CD4-positive, alpha-beta T cell (primary cell): ENCODE measurements at regions of chr2 and their contacts with region 1.

Region 1: DNA sequence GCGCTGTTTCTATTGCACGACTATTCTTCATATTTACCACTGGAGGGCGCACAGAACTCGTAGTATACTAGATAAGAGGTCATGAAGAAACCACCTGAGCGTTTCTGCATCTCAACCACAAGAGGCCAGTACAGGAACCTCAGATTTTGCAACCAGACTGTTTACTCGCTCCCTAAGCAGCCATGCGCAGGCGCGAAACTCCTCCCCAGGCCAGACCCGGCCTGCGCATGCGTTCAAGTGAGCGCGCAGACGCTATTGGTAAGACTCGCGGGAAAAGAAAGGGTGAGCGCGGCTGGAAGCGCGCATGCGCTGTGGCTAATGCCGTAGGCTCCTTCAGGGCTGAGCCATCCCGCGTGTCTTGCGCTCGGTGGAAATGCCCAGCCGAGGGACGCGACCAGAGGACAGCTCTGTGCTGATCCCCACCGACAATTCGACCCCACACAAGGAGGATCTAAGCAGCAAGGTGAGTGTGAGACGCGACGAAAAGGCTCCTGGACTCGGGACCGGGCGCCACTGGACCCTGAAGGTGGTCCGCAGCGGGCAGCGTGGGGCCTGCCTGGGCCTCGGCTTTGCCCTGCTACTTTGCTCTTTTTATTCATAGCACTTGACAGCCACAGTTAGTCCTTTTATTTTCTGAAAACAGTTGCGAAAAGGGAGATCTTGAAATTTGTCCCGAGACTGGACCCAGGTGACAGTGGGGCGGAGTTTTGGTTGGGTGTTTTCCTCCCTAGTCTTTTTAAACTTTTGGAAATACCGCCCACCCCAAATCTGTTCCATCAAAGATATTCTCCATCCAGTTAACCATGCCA is at the start of gene ASNSD1:
- DNase-seq: peak; percentile 95 to 100 (median 99)
- ATAC-seq: peak; percentile 89
- H3K4me3 ChIP-seq: peak within 1 kb of the TSS; percentile 97
- H3K4me3 Mint-ChIP-seq: no peak within 1 kb of the TSS
- H3K27ac ChIP-seq: peak within 1 kb of the TSS; percentile 87 to 93
- H3K27ac Mint-ChIP-seq: no peak within 1 kb of the TSS
- H3K4me1 ChIP-seq: peaks cover 41% of the 10 kb centered on the region
- H3K4me1 Mint-ChIP-seq: peaks cover 60% of the 10 kb centered on the region
- H3K27me3 ChIP-seq: no peaks in the 10 kb centered on the region
- H3K27me3 Mint-ChIP-seq: no peaks in the 10 kb centered on the region
- CTCF ChIP-seq: peak; percentile 92
- total RNA-seq, gene ASNSD1: 38.9 to 40.6 TPM

Region 2: GRCh38 chr2:189580658-189581353 is 80.5 kb before region 1 on chr2 and contains the start of gene SLC40A1:
- CTCF ChIA-PET with region 1: no interaction called
- POLR2A ChIA-PET with region 1: interaction called, 28 read pairs
- intact Hi-C with region 1: loop called in 1 of 2 experiments (anchors 5 kb)
- DNase-seq: peak; percentile 44 to 88 (median 69)
- ATAC-seq: peak; percentile 96
- H3K4me3 ChIP-seq: peak within 1 kb of the TSS; percentile 79
- H3K4me3 Mint-ChIP-seq: peak within 1 kb of the TSS; percentile 95
- H3K27ac ChIP-seq: peak within 1 kb of the TSS; percentile 46 to 66
- H3K27ac Mint-ChIP-seq: peak within 1 kb of the TSS; percentile 83
- H3K4me1 ChIP-seq: peaks cover 21% of the 10 kb centered on the region
- H3K4me1 Mint-ChIP-seq: peaks cover 56% of the 10 kb centered on the region
- H3K27me3 ChIP-seq: no peaks in the 10 kb centered on the region
- H3K27me3 Mint-ChIP-seq: peaks cover 9% of the 10 kb centered on the region
- CTCF ChIP-seq: no peak
- total RNA-seq, gene SLC40A1: 7.4 to 8.2 TPM

Region 3: DNA sequence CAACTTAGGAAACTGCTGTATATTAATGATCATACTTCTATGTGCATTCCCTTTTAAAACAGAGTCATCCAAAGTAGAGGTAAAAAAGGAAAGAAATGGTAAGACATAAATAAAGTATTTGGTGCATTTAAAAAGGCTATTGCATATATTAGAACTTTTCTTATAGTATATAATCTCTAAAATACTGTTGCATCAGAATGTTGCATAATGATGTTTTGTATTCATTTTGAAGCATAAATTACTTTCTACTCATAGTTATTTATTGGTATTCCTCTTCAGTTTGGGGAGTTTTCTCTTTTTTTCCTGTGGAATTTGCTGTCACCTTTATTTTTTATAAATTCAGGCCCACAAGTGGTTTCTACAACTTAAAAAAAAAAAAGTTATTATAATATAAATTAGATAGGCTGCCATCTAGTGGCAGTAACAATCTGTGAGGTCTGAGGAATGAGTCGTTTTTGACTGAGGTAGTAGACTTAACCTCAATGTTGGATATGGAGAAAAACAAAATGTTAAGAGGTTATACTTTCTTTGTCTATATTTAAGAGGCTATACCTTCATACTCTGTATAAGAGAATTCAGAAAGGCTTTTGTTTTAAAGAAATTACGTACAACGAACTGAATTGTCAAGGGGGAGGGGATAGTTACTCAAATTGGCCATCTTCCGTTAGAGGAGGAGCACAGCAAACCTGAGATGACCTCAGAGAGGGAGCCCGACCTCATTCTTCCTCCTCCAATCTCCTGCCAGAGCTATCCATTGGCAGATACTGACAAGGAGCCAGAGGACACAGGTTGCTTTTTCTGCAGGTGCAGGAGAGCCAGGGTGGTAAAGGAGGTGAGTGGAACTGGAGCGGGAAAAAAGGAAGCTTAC is 36.9 kb after region 1 on chr2:
- CTCF ChIA-PET with region 1: interaction called, 38 read pairs
- POLR2A ChIA-PET with region 1: interaction called, 7 read pairs
- intact Hi-C with region 1: loop called (anchors 1 kb)
- DNase-seq: peak in 8 of 14 experiments; percentile 11 to 76 (median 49)
- ATAC-seq: peak; percentile 71
- H3K4me3 ChIP-seq: no peak overlapping the region
- H3K4me3 Mint-ChIP-seq: no peak overlapping the region
- H3K27ac ChIP-seq: no peak overlapping the region
- H3K27ac Mint-ChIP-seq: no peak overlapping the region
- H3K4me1 ChIP-seq: no peaks in the 10 kb centered on the region
- H3K4me1 Mint-ChIP-seq: no peaks in the 10 kb centered on the region
- H3K27me3 ChIP-seq: no peaks in the 10 kb centered on the region
- H3K27me3 Mint-ChIP-seq: no peaks in the 10 kb centered on the region
- CTCF ChIP-seq: peak; percentile 87

Region 4: GRCh38 chr2:189783927-189784867 is 122.8 kb after region 1 on chr2 and contains the starts of genes ORMDL1 and PMS1:
- CTCF ChIA-PET with region 1: no interaction called
- POLR2A ChIA-PET with region 1: interaction called, 10 read pairs
- intact Hi-C with region 1: loop called (anchors 1 to 5 kb)
- DNase-seq: peak; percentile 84 to 98 (median 92)
- ATAC-seq: peak; percentile 91
- H3K4me3 ChIP-seq: peak within 1 kb of the TSS; percentile 84
- H3K4me3 Mint-ChIP-seq: peak within 1 kb of the TSS; percentile 99
- H3K27ac ChIP-seq: peak within 1 kb of the TSS; percentile 90 to 93
- H3K27ac Mint-ChIP-seq: peak within 1 kb of the TSS; percentile 99
- H3K4me1 ChIP-seq: peaks cover 23% of the 10 kb centered on the region
- H3K4me1 Mint-ChIP-seq: peaks cover 58% of the 10 kb centered on the region
- H3K27me3 ChIP-seq: no peaks in the 10 kb centered on the region
- H3K27me3 Mint-ChIP-seq: no peaks in the 10 kb centered on the region
- CTCF ChIP-seq: no peak
- total RNA-seq, gene ORMDL1: 104 to 106 TPM
- total RNA-seq, gene PMS1: 9.6 to 9.8 TPM

Region 5: DNA sequence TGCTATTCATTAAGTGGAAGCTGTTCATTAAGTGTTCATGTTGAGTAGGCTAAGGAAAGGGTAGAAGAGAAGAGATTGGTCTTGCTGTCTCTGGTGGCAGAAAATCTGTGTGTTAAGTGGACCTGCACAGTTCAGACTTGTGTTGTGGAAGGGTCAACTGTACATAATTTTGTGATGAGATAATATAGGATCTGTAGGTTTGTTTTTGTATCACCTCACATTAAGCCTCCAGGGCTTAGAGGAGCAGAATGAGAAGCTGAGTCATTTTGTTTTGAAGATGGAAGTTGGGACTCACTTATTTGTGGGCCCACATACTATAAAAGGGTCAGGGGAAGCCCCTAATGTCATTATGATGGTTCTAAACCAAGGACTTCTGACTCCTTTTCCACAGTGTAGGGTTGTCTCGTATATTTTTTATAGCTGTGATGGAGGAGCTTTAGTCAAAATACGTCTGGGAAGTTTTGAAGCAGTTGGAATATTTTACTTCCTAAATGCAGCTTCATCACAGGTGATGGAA is 141.1 kb after region 1 on chr2:
- CTCF ChIA-PET with region 1: no interaction called
- POLR2A ChIA-PET with region 1: no interaction called
- intact Hi-C with region 1: no loop called
- DNase-seq: no peak
- ATAC-seq: no peak
- H3K4me3 ChIP-seq: no peak overlapping the region
- H3K4me3 Mint-ChIP-seq: no peak overlapping the region
- H3K27ac ChIP-seq: no peak overlapping the region
- H3K27ac Mint-ChIP-seq: no peak overlapping the region
- H3K4me1 ChIP-seq: no peaks in the 10 kb centered on the region
- H3K4me1 Mint-ChIP-seq: no peaks in the 10 kb centered on the region
- H3K27me3 ChIP-seq: no peaks in the 10 kb centered on the region
- H3K27me3 Mint-ChIP-seq: no peaks in the 10 kb centered on the region
- CTCF ChIP-seq: no peak

Region 6: GRCh38 chr2:190319555-190320498 is 658.5 kb after region 1 on chr2 and contains the start of gene HIBCH:
- CTCF ChIA-PET with region 1: no interaction called
- POLR2A ChIA-PET with region 1: no interaction called
- intact Hi-C with region 1: loop called in 1 of 2 experiments (anchors 5 kb)
- DNase-seq: peak; percentile 59 to 91 (median 80)
- ATAC-seq: peak; percentile 87
- H3K4me3 ChIP-seq: peak within 1 kb of the TSS; percentile 87
- H3K4me3 Mint-ChIP-seq: peak within 1 kb of the TSS; percentile 95
- H3K27ac ChIP-seq: peak within 1 kb of the TSS; percentile 76 to 91
- H3K27ac Mint-ChIP-seq: peak within 1 kb of the TSS; percentile 89
- H3K4me1 ChIP-seq: peaks cover 28% of the 10 kb centered on the region
- H3K4me1 Mint-ChIP-seq: peaks cover 54% of the 10 kb centered on the region
- H3K27me3 ChIP-seq: no peaks in the 10 kb centered on the region
- H3K27me3 Mint-ChIP-seq: no peaks in the 10 kb centered on the region
- CTCF ChIP-seq: peak; percentile 73
- total RNA-seq, gene HIBCH: 3.5 to 7.1 TPM

Region 7: DNA sequence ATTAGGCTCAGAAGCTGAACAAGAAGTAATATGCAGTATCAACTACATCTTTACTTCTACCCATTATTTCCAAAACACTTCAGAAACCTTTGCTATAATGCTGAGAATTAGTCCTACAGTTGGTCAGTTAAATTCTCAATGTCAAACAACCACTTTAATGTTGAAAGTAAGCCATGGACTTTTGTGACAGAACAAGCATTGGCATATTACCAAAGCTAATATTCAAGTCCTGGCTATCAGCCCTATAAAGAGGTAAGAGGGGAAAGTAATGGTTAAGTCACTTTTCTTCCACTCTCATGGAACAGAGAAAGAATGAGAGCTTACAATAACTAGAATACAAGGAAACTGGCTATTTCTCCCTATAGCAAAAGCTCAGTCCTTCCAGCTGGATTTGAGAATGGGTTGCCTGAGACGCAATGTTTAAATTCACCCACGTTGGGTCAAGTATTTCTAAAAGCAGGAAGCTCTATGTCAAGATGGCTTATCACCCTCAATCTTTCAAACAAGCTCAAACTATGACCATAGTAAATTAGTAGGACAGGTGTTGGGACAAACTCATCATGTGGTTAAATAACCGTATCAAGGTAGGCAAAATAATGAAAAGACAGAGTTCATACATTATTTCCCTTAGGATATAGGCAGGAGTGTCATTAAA is 715.4 kb after region 1 on chr2:
- CTCF ChIA-PET with region 1: no interaction called
- POLR2A ChIA-PET with region 1: no interaction called
- intact Hi-C with region 1: loop called in 1 of 2 experiments (anchors 1 kb)
- DNase-seq: no peak
- ATAC-seq: no peak
- H3K4me3 ChIP-seq: no peak overlapping the region
- H3K4me3 Mint-ChIP-seq: no peak overlapping the region
- H3K27ac ChIP-seq: no peak overlapping the region
- H3K27ac Mint-ChIP-seq: no peak overlapping the region
- H3K4me1 ChIP-seq: no peaks in the 10 kb centered on the region
- H3K4me1 Mint-ChIP-seq: no peaks in the 10 kb centered on the region
- H3K27me3 ChIP-seq: no peaks in the 10 kb centered on the region
- H3K27me3 Mint-ChIP-seq: no peaks in the 10 kb centered on the region
- CTCF ChIP-seq: no peak